A673 (cell line): ENCODE measurements at regions of chr13 and their contacts with region 1.

Region 1: DNA sequence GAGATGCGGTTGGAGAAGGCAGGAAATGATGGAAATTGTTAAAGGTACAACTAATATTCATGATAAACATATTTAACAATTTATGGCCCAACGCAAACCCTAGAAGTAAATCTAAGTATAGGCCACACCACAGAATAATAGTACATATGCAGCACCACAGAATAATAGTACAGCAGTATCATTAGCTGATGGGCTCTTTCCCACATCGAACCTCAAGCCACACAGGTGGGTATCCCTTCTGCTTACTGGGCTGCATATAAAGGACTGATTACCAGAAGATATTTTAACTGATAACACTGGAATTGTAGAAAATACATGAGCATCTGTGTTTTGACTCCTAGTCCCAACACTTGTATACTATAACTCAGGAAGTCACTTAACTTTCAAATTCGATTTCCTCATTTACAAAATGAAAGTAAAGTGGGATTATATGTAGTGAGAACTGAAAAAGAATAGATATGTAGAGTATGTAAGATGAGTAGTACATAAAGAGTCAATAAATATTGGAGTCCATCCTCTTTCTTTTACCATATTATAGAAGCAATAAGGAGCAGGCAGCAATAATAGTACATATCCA is 91.5 kb downstream of the TSC22D1 start:
- DNase-seq: no peak
- H3K4me3 ChIP-seq: no peak overlapping the region
- H3K27ac ChIP-seq: no peak overlapping the region
- H3K4me1 ChIP-seq: no peaks in the 10 kb centered on the region
- H3K27me3 ChIP-seq: no peaks in the 10 kb centered on the region
- CTCF ChIP-seq: no peak

Region 2: DNA sequence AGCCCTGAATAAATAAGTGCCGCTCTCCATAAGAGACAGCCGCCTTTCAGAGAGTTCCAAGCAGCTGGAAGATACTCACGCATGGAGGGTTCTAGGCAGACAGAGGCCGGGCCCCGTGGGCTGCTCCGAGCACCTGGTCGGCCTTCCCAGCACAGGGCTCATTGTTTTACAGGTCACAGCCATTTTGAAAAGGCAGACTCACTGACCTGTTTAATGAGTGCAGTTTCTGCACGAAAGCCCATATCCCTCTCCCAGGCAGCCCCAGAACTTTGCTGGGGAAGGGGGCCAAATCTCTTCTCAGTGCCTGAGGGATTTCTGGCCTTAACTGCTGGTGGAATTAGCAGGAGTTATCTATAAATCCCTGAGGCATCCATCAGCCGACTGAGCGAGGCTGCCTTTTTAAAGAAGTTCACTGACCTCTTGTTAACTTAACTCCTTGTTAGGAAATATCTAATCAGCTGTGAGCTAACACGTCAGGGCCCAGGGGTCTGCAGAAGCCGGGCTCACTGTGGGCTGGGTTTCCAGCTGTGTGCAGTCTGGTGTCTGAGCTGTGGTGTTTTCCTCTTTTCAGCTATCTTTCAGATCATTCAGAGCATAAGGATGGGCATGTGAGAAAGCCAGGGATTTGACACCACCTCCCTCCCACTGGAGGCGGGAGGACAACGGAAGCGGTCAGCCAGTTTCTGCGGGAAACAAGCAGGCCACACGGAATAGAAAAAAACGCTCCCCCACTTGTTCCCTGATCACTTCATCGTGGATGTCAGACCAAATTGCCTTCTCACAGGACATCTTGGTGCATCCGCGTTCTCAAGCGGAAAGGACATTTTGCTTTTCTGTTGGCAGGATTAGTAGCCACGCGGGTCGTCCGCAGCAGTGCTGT is 87.7 kb before region 1 on chr13:
- CTCF ChIA-PET with region 1: no interaction called
- POLR2A ChIA-PET with region 1: no interaction called
- intact Hi-C with region 1: no loop called
- DNase-seq: no peak
- H3K4me3 ChIP-seq: no peak overlapping the region
- H3K27ac ChIP-seq: no peak overlapping the region
- H3K4me1 ChIP-seq: no peaks in the 10 kb centered on the region
- H3K27me3 ChIP-seq: no peaks in the 10 kb centered on the region
- CTCF ChIP-seq: no peak

Region 3: DNA sequence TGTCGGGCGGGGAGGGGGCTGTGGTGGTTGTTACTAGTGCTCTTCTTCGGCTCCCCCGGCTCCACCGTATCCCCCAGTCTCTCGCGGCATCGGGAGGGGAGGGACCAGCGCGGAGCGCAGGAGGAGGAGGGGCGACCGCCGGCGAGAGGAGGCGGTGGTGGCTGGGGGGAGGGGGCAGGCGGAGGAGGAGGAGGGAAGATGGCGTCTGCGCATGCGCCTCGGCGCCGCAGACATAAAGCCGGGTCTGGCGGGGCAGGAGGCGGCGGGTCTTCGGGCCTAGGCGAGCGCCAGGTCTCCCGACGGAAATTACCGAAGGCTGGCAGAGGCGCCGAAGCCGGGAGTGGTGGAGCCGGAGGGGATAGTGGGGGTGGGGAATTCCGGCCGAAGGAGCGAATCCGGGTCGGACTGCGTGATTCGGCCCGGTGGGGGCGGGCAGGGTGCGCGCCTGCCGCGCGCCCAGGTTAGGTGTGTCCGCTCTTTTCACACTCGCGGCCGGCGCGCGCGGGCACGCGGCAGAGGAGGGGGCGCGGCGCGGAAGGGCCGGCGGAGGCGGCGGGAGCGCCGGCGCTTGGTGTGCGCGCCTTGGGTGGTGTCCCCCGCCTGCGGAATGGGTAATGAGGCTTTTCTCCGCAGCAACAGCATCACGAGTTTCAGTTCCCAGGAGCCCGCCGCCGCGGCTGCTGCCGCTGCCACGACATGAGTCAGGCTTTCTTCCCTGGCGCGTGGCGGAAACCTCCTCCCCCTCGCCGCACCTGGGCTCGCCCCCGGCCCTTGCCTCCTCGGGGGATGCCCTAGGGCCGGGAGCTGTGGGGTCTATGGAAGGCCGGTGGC is 92.8 kb after region 1 on chr13:
- CTCF ChIA-PET with region 1: no interaction called
- POLR2A ChIA-PET with region 1: no interaction called
- intact Hi-C with region 1: loop called (anchors 5 kb)
- DNase-seq: peak; percentile 98
- H3K4me3 ChIP-seq: peak overlapping the region; percentile 91
- H3K27ac ChIP-seq: peak overlapping the region; percentile 94
- H3K4me1 ChIP-seq: peaks cover 27% of the 10 kb centered on the region
- H3K27me3 ChIP-seq: no peaks in the 10 kb centered on the region
- CTCF ChIP-seq: no peak

Region 4: DNA sequence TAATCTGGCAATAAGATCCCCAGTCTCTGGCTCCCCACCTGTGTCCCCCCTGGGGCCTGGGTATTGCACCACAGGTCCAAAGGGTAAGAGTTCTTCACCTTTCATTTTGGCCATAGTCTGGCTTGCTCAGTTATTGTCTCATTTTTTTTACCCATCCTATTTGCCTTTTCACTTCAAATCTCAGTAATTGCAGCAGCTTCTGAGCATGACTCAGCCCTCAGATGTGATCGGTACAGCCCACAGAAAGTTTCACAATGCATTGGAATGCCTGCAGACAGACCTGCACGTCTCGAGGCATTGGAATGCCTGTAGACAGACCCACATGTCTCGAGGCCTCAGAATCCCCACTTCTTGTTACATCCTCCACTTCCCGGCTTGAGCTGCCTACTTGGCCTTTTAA is 331.0 kb after region 1 on chr13:
- CTCF ChIA-PET with region 1: interaction called, 14 read pairs
- POLR2A ChIA-PET with region 1: no interaction called
- intact Hi-C with region 1: loop called (anchors 10 kb)
- DNase-seq: peak; percentile 52
- H3K4me3 ChIP-seq: no peak overlapping the region
- H3K27ac ChIP-seq: no peak overlapping the region
- H3K4me1 ChIP-seq: peaks cover 4% of the 10 kb centered on the region
- H3K27me3 ChIP-seq: no peaks in the 10 kb centered on the region
- CTCF ChIP-seq: no peak

Region 5: GRCh38 chr13:44879463-44880058 is 394.9 kb after region 1 on chr13:
- CTCF ChIA-PET with region 1: interaction called, 4 read pairs
- POLR2A ChIA-PET with region 1: no interaction called
- intact Hi-C with region 1: loop called (anchors 5 kb)
- DNase-seq: peak; percentile 50
- H3K4me3 ChIP-seq: no peak overlapping the region
- H3K27ac ChIP-seq: no peak overlapping the region
- H3K4me1 ChIP-seq: no peaks in the 10 kb centered on the region
- H3K27me3 ChIP-seq: no peaks in the 10 kb centered on the region
- CTCF ChIP-seq: peak; percentile 39

Region 6: DNA sequence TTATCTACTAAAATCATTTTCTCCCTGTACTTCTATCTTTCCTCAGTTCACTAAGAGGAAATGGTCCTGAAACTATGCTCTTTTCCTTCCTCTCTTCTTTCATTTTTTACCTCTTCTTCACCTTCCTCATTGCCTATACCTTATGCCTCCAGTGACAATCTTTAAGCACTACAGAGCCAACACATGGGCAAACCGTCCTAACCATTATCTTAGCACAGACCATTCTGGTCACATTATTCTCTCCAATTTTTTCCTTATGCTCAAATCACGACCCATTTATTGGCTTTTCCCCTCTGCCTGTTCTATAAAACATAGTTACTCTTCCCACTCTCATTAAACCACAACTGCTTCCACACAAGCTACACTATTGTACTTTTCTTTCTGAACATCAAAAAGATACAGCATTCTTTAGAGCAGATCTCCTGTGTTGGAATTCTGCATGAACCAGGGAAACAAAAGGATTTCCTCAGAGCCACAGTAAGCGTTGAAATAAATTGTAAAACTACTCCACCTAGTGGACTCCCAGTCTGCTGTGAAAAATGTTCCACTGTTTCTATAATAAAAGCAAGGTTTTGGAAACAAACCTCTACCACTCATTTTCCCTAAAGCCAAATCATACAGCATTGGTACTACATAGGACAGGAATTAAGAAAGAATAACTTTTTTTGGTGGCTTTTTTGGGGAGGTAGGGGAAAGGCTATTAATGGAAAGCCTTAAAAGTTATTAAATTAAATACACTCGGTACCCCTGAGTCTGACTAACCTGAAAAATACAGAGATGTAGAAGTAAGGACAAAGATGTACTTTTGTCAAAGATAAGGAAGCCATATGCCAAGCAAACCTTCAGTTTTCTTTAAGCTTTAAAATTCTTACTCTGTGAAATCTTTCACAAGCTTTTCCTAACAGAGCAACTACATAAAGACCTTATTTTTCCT is 485.2 kb after region 1 on chr13:
- CTCF ChIA-PET with region 1: interaction called, 3 read pairs
- POLR2A ChIA-PET with region 1: no interaction called
- intact Hi-C with region 1: loop called (anchors 2 kb)
- DNase-seq: peak; percentile 71
- H3K4me3 ChIP-seq: no peak overlapping the region
- H3K27ac ChIP-seq: no peak overlapping the region
- H3K4me1 ChIP-seq: peaks cover 16% of the 10 kb centered on the region
- H3K27me3 ChIP-seq: no peaks in the 10 kb centered on the region
- CTCF ChIP-seq: peak; percentile 89

Region 7: DNA sequence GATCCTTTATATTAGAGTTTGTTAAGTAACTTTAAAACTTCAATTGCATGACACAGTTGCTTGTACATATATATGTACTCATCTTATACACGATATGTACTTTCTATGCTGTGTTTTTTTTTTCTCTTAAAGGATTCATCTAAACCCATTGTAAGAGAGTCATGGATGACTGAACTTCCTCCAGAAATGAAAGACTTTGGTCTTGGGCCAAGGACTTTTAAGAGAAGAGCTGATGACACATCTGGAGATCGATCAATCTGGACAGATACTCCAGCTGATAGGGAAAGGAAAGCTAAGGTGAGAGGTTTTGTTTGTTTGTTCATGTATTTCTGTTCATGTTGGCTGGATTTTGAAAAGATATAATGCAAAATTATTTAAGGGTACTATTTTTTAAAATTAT is 530.6 kb after region 1 on chr13:
- CTCF ChIA-PET with region 1: no interaction called
- POLR2A ChIA-PET with region 1: no interaction called
- intact Hi-C with region 1: no loop called
- DNase-seq: peak; percentile 12
- H3K4me3 ChIP-seq: no peak overlapping the region
- H3K27ac ChIP-seq: no peak overlapping the region
- H3K4me1 ChIP-seq: no peaks in the 10 kb centered on the region
- H3K27me3 ChIP-seq: no peaks in the 10 kb centered on the region
- CTCF ChIP-seq: no peak